CD4-positive, alpha-beta memory T cell (primary cell): ENCODE measurements at regions of chr6 and their contacts with region 1.

Region 1: DNA sequence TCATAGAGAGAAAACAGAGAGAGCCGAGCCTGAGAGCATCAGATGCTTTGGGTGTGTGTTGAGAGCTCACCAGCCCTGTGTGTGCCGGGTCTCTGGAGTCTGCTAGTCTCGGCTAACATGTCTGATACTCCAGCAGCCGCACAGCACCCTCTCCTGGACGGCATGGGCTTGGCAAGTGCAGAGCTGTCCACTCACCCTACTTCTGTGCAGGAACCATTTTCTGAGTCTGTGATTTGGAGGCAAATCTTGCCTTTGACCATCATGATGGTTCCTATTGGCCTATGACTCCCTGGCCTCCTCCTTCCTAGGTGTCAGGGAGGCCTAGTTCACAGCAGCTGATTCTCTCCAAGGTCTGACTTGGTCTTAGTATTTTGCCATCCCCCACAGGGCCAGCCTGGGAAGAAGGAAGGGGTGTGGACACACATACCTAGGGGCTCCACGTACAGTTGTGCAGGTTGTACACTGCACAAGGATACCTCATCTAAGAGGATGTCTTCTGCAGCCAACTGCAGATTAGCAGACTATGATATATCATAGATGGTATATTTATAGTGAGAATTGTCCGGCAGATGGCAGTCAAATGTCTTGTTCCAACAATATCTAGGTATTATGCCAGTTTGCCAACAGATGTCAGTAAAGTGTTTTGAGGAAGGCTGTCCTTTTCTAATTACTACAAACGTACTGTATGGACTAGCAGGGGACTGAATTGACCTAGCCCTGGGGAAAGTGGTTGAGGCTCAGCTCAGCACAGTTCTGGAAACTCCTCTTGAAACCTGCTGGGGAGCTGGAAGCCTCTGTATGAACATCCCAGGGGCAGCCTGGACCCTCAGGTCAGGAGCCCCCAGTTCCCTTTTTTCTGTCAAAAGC is 13.0 kb downstream of the FGD2 start:
- DNase-seq: peak; percentile 82 to 92 (median 86)
- H3K4me3 ChIP-seq: no peak overlapping the region
- H3K4me3 Mint-ChIP-seq: peak overlapping the region in 4 of 8 donors; percentile 4 to 57 (median 28)
- H3K27ac ChIP-seq: peak overlapping the region; percentile 18
- H3K27ac Mint-ChIP-seq: peak overlapping the region; percentile 31 to 91 (median 88)
- H3K4me1 ChIP-seq: peaks cover 48% of the 10 kb centered on the region
- H3K4me1 Mint-ChIP-seq: peaks cover 37 to 49% (median 42%) of the 10 kb centered on the region in 4 donors
- H3K27me3 ChIP-seq: no peaks in the 10 kb centered on the region
- H3K27me3 Mint-ChIP-seq: no peaks in the 10 kb centered on the region

Region 2: GRCh38 chr6:36765594-36766398 is 252.6 kb before region 1 on chr6:
- CTCF ChIA-PET with region 1: interaction called, 119 read pairs
- POLR2A ChIA-PET with region 1: interaction called, 5 read pairs
- intact Hi-C with region 1: loop called (anchors 1 kb)
- DNase-seq: peak; percentile 75 to 80 (median 78)
- H3K4me3 ChIP-seq: no peak overlapping the region
- H3K4me3 Mint-ChIP-seq: peak overlapping the region in 2 of 8 donors; percentile 11 to 28
- H3K27ac ChIP-seq: no peak overlapping the region
- H3K27ac Mint-ChIP-seq: peak overlapping the region in 5 of 7 donors; percentile 11 to 66 (median 50)
- H3K4me1 ChIP-seq: peaks cover 45% of the 10 kb centered on the region
- H3K4me1 Mint-ChIP-seq: peaks cover 27 to 37% (median 31%) of the 10 kb centered on the region in 4 donors
- H3K27me3 ChIP-seq: no peaks in the 10 kb centered on the region
- H3K27me3 Mint-ChIP-seq: no peaks in the 10 kb centered on the region

Region 3: GRCh38 chr6:36897609-36898008 is 120.8 kb before region 1 on chr6:
- CTCF ChIA-PET with region 1: interaction called, 12 read pairs
- POLR2A ChIA-PET with region 1: interaction called, 3 read pairs
- intact Hi-C with region 1: no loop called
- DNase-seq: peak; percentile 13 to 45 (median 32)
- H3K4me3 ChIP-seq: no peak overlapping the region
- H3K4me3 Mint-ChIP-seq: no peak overlapping the region
- H3K27ac ChIP-seq: no peak overlapping the region
- H3K27ac Mint-ChIP-seq: peak overlapping the region in 2 of 7 donors; percentile 42 to 47
- H3K4me1 ChIP-seq: no peaks in the 10 kb centered on the region
- H3K4me1 Mint-ChIP-seq: peaks cover 4 to 20% (median 15%) of the 10 kb centered on the region in 4 donors
- H3K27me3 ChIP-seq: no peaks in the 10 kb centered on the region
- H3K27me3 Mint-ChIP-seq: no peaks in the 10 kb centered on the region

Region 4: DNA sequence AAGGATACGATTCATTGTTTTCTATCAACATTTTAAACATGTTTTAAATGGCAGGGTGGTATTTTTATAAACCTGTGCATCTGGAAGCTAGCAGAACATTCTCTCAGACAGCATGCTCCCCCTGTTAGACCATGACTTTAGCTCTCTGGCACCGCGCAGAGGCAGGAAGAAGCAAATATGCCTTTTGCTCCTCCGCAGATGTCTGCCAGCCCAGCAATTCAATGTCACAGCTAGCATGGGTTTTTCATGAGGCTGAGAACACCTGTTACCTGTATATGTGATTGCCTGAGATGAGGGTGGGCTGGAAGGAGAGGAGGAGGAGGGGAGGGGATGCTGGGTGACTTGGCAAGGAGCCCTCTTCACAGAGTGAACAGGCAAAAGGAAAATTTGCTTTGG is 39.1 kb before region 1 on chr6:
- CTCF ChIA-PET with region 1: interaction called, 35 read pairs
- POLR2A ChIA-PET with region 1: interaction called, 3 read pairs
- intact Hi-C with region 1: no loop called
- DNase-seq: peak in 4 of 5 donors; percentile 28 to 48 (median 34)
- H3K4me3 ChIP-seq: no peak overlapping the region
- H3K4me3 Mint-ChIP-seq: peak overlapping the region in 3 of 8 donors; percentile 14 to 49 (median 20)
- H3K27ac ChIP-seq: no peak overlapping the region
- H3K27ac Mint-ChIP-seq: peak overlapping the region; percentile 24 to 86 (median 64)
- H3K4me1 ChIP-seq: peaks cover 36% of the 10 kb centered on the region
- H3K4me1 Mint-ChIP-seq: peaks cover 24 to 37% (median 25%) of the 10 kb centered on the region in 4 donors
- H3K27me3 ChIP-seq: no peaks in the 10 kb centered on the region
- H3K27me3 Mint-ChIP-seq: no peaks in the 10 kb centered on the region

Region 5: GRCh38 chr6:37029249-37029971 is 11.0 kb after region 1 on chr6:
- CTCF ChIA-PET with region 1: interaction called, 126 read pairs
- POLR2A ChIA-PET with region 1: interaction called, 3 read pairs
- intact Hi-C with region 1: no loop called
- DNase-seq: peak in 3 of 5 donors; percentile 19 to 39 (median 38)
- H3K4me3 ChIP-seq: no peak overlapping the region
- H3K4me3 Mint-ChIP-seq: peak overlapping the region in 1 of 8 donors; percentile 35
- H3K27ac ChIP-seq: no peak overlapping the region
- H3K27ac Mint-ChIP-seq: peak overlapping the region in 6 of 7 donors; percentile 10 to 82 (median 25)
- H3K4me1 ChIP-seq: peaks cover 17% of the 10 kb centered on the region
- H3K4me1 Mint-ChIP-seq: peaks cover 14 to 40% (median 30%) of the 10 kb centered on the region in 4 donors
- H3K27me3 ChIP-seq: no peaks in the 10 kb centered on the region
- H3K27me3 Mint-ChIP-seq: no peaks in the 10 kb centered on the region

Region 6: DNA sequence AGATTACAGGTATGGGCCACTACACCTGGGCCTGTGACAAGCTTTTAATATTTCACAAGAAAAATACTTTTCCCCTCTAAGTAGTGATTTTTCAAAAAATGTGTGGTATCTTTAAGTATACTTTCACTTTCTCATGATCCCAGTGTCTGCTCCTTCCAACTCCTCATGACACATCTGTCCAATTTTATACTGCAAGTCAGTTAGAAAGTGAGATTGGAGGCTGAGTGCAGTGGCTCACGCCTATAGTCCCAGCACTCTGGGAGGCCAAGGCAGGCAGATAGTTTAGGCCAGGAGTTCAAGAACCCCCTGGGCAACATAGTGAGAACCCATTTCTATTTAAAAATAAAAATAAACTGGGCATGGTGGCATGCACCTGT is 171.7 kb after region 1 on chr6:
- CTCF ChIA-PET with region 1: interaction called, 1,184 read pairs
- POLR2A ChIA-PET with region 1: no interaction called
- intact Hi-C with region 1: no loop called
- DNase-seq: no peak
- H3K4me3 ChIP-seq: no peak overlapping the region
- H3K4me3 Mint-ChIP-seq: peak overlapping the region in 4 of 8 donors; percentile 10 to 52 (median 25)
- H3K27ac ChIP-seq: no peak overlapping the region
- H3K27ac Mint-ChIP-seq: peak overlapping the region in 3 of 7 donors; percentile 47 to 68 (median 57)
- H3K4me1 ChIP-seq: peaks cover 65% of the 10 kb centered on the region
- H3K4me1 Mint-ChIP-seq: peaks cover 30 to 55% (median 39%) of the 10 kb centered on the region in 4 donors
- H3K27me3 ChIP-seq: no peaks in the 10 kb centered on the region
- H3K27me3 Mint-ChIP-seq: no peaks in the 10 kb centered on the region

Region 7: GRCh38 chr6:37314487-37315156 is 296.2 kb after region 1 on chr6:
- CTCF ChIA-PET with region 1: interaction called, 6 read pairs
- POLR2A ChIA-PET with region 1: no interaction called
- intact Hi-C with region 1: loop called (anchors 1 kb)
- DNase-seq: peak in 3 of 5 donors; percentile 19 to 30 (median 20)
- H3K4me3 ChIP-seq: no peak overlapping the region
- H3K4me3 Mint-ChIP-seq: no peak overlapping the region
- H3K27ac ChIP-seq: no peak overlapping the region
- H3K27ac Mint-ChIP-seq: peak overlapping the region in 5 of 7 donors; percentile 8 to 92 (median 36)
- H3K4me1 ChIP-seq: no peaks in the 10 kb centered on the region
- H3K4me1 Mint-ChIP-seq: peaks cover 0 to 4% (median 3%) of the 10 kb centered on the region in 4 donors
- H3K27me3 ChIP-seq: no peaks in the 10 kb centered on the region
- H3K27me3 Mint-ChIP-seq: no peaks in the 10 kb centered on the region

Region 8: GRCh38 chr6:38656896-38657295 is 1638.5 kb after region 1 on chr6:
- CTCF ChIA-PET with region 1: no interaction called
- POLR2A ChIA-PET with region 1: no interaction called
- intact Hi-C with region 1: no loop called
- DNase-seq: no peak
- H3K4me3 ChIP-seq: no peak overlapping the region
- H3K4me3 Mint-ChIP-seq: no peak overlapping the region
- H3K27ac ChIP-seq: no peak overlapping the region
- H3K27ac Mint-ChIP-seq: no peak overlapping the region
- H3K4me1 ChIP-seq: no peaks in the 10 kb centered on the region
- H3K4me1 Mint-ChIP-seq: no peaks in the 10 kb centered on the region
- H3K27me3 ChIP-seq: no peaks in the 10 kb centered on the region
- H3K27me3 Mint-ChIP-seq: no peaks in the 10 kb centered on the region